Activated naive CD4-positive, alpha-beta T cell treated with anti-CD3 and anti-CD28 coated beads for 36 hours (primary cell): ENCODE measurements at regions of chr4 and their contacts with region 1.

Region 1: DNA sequence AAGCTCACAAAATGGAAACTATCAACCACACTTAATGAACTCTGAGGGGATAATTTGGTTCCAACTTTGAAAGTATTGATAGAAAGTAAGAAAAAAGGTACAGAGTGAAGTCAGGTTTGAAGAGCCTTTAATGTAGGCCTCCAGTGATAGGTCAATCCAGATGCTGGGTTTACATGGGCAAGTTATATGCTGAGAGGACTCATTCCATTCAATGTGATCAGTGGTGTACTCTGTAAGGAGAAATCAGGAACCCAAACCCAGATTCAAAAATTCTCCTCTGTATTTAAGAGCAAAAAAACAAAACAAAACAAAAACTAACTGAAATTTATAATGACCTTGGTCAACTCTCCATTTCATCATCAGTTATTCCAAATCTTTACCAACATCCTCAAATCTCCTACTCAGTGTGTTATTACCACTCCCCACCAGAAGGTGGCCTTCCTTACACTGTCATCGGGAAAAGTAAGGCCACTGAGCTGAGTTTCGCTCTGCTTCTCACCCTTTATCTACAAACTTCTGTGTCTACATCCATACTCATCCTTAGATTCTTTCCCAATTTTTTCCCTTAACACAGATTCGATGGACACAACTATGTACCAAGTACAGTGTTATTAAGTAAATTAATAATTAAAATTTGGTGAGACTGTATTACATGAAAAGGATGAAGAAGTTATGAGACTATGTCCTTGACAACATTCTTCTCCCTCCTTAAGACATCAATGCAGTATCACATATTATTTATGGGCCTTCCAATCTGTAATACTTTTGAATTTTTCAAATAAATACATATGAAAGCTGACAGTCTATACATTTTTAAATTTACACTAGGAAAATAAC is 88.3 kb downstream of the ZAR1 start:
- DNase-seq: peak; percentile 72
- H3K4me3 Mint-ChIP-seq: no peak overlapping the region
- H3K27ac Mint-ChIP-seq: no peak overlapping the region
- H3K4me1 Mint-ChIP-seq: peaks cover 7% of the 10 kb centered on the region
- H3K27me3 Mint-ChIP-seq: no peaks in the 10 kb centered on the region

Region 2: DNA sequence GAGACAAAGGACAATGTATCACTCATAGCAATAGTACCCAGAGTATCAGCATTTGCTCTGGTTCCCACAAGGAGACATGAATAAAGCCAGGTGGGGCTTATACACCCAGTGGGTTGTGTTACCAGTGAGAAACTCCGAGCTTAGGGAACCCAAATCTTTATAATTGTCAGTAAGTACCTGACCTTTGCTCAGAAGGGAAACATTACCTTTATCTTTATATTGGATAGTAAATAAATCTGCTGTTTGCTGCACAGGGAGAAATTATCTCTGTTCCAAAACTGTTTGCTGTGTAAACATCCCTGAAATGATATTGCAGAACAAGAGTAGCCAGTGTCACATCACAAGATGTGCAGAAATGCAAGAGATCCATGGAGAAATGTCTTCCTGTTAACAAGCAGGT is 249.2 kb before region 1 on chr4:
- CTCF ChIA-PET with region 1: no interaction called
- intact Hi-C with region 1: no loop called
- DNase-seq: no peak
- H3K4me3 Mint-ChIP-seq: no peak overlapping the region
- H3K27ac Mint-ChIP-seq: no peak overlapping the region
- H3K4me1 Mint-ChIP-seq: peaks cover 8% of the 10 kb centered on the region
- H3K27me3 Mint-ChIP-seq: peaks cover 5% of the 10 kb centered on the region

Region 3: DNA sequence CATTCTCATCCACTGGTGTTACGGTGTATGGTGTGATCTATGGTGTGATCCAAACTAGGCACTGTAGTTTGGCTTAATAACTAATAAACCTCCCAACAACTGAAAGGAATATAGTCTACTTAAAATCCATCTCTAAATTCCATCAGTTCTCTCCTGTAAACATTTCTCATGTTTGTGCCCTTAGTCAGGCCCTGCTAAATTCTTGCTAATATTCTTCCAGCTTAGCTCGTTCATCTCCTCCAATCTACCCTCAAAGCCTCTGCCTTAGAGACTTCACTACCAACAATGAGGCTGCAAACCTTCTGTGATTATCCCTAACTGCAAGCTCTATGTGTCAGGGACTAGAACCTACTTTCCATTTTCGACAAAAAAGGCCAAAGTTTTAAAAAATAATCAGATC is 60.2 kb before region 1 on chr4:
- CTCF ChIA-PET with region 1: no interaction called
- intact Hi-C with region 1: no loop called
- DNase-seq: no peak
- H3K4me3 Mint-ChIP-seq: no peak overlapping the region
- H3K27ac Mint-ChIP-seq: no peak overlapping the region
- H3K4me1 Mint-ChIP-seq: no peaks in the 10 kb centered on the region
- H3K27me3 Mint-ChIP-seq: no peaks in the 10 kb centered on the region

Region 4: DNA sequence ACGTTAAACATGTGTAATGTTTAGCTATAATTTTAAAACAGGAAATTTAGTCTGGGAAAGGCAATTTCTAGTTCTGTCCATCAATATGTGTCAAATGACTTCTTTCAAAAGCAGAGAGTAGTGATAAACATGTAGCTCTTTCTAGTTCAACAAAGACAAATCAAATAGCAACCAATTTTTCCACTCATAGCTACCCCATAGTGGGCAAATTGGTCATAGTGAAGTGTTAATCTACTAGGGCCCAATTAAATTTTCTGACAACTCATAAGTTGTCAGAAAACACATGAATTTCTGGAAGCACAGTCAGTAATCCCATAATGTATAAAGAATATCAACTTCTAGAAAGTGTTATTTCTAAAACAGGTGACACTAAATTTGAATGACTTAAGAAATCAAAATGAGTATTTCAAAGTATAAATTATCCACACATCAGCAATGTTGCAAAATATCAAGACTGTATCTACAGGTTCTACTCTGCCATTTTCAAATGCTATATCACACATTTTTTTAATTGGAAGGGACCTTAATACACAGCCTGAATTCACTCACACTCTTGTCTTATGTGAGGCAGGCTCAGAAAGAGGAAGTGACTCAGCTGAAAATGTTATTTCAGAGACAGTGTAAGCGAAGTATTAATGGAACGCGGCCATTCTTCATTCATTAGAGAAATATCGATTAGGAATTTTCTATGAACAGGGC is 320.5 kb after region 1 on chr4:
- CTCF ChIA-PET with region 1: interaction called, 6 read pairs
- intact Hi-C with region 1: loop called (anchors 2 kb)
- DNase-seq: no peak
- H3K4me3 Mint-ChIP-seq: peak overlapping the region; percentile 16
- H3K27ac Mint-ChIP-seq: peak overlapping the region; percentile 77
- H3K4me1 Mint-ChIP-seq: peaks cover 35% of the 10 kb centered on the region
- H3K27me3 Mint-ChIP-seq: no peaks in the 10 kb centered on the region

Region 5: GRCh38 chr4:48944756-48945241 is 366.4 kb after region 1 on chr4:
- CTCF ChIA-PET with region 1: interaction called, 7 read pairs
- intact Hi-C with region 1: loop called (anchors 5 kb)
- DNase-seq: peak; percentile 81
- H3K4me3 Mint-ChIP-seq: no peak overlapping the region
- H3K27ac Mint-ChIP-seq: no peak overlapping the region
- H3K4me1 Mint-ChIP-seq: peaks cover 22% of the 10 kb centered on the region
- H3K27me3 Mint-ChIP-seq: no peaks in the 10 kb centered on the region